Endothelial cell of umbilical vein (primary cell): ENCODE measurements at regions of chr3 and their contacts with region 1.

Region 1: DNA sequence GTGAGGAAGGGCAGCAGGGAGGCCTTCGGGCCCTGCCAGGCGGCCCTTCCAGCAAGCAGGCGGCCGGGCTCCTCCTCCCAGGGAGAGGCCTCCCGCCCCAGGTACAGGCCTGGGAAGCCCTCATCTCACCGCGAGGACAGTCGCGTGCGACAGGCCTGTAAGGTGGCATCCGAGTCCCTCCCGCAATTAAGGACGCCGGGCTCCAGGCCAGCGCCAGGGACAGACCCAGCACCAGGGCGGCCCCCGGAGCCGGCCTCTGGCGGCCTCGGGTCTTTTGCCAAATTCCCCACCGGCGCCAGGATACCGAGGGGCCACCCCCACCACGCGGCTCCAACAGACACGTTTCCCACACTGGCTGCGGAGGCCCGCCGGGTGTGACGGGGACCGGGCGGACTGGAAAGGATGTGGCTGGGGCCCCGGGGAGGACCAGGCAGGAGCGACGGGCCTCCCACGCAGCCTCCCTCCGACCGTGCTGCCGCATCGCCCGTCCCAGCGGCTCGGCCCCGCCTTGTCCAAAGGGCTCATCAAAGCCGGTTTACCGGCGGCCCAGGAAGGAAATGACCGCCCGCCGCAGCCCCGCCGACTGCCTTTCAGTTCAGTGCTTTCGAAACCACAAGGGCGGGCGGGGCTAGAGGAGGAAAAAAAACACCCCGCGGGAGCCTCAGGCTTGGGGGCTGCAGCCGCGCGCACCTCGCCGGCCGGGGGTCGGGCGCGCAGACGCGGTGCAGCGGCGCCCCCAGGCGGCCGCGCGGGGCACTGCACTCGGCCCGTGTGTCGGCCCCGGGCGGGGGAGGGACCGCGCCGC is 11.3 kb downstream of the XXYLT1 start:
- DNase-seq: peak; percentile 96
- H3K4me3 ChIP-seq: peak overlapping the region in 1 of 3 experiments; percentile 70
- H3K27ac ChIP-seq: peak overlapping the region; percentile 98
- H3K4me1 ChIP-seq: peaks cover 55% of the 10 kb centered on the region
- H3K27me3 ChIP-seq: no peaks in the 10 kb centered on the region
- CTCF ChIP-seq: peak; percentile 44 to 88
- POLR2A ChIP-seq: peak; percentile 38

Region 2: DNA sequence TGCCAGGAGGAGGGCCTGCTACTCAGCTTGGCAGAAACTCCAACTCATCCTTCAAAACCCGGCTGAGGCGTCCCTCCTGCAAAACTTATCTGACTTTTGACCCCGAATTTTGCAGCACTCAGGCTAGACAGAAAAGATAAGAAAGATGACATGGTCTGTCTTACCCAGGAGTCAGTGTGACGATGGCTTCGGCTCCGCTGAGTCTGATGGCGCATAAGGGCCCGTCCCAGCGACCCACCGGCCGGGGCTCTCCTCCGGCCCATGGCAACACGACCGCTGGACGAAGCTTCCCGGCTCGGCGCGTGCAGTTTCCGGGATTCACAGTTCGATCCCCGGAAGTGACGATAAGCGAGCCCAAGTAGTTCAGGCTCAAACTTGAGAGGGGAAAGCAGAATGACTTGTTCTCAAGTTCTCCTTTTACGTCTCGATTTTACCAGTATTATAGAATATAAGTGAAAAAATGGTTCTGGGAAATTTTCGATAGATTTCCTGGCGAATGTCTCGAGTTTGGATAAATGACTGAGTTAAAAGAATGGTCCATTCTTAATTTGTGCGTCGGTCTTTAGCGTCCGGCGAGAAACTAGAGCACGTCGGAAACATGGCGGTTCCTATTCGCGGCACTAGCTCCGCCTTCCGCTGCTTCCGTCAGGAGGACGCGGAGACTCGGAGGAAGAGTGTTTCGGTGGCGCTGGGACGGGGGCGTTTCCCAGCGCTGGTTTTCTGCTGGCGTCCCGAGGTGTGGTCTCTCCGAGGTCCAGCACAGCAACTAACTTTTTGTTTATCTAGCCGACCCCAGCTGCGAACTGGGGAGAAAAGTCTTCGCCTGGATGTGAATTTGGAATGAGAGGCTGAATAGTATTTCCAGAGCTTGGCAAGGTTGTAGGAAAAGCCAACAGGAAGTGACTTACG is 587.5 kb before region 1 on chr3 and contains the start of gene LSG1:
- CTCF ChIA-PET with region 1: interaction called, 12 read pairs
- POLR2A ChIA-PET with region 1: no interaction called
- dilution Hi-C with region 1: no loop called
- intact Hi-C with region 1: loop called (anchors 1 kb)
- DNase-seq: peak; percentile 96
- H3K4me3 ChIP-seq: peak within 1 kb of the TSS; percentile 61 to 97 (median 64)
- H3K27ac ChIP-seq: peak within 1 kb of the TSS; percentile 93
- H3K4me1 ChIP-seq: peaks cover 15% of the 10 kb centered on the region
- H3K27me3 ChIP-seq: peaks cover 0 to 2% of the 10 kb centered on the region in 2 experiments
- CTCF ChIP-seq: no peak
- POLR2A ChIP-seq: peak; percentile 80
- total RNA-seq, gene LSG1: 48.3 and 52.7 TPM in 2 replicates

Region 3: GRCh38 chr3:194769020-194769643 is 490.5 kb before region 1 on chr3:
- CTCF ChIA-PET with region 1: no interaction called
- POLR2A ChIA-PET with region 1: no interaction called
- dilution Hi-C with region 1: no loop called
- intact Hi-C with region 1: loop called (anchors 2 kb)
- DNase-seq: peak; percentile 99
- H3K4me3 ChIP-seq: peak overlapping the region in 1 of 3 experiments; percentile 25
- H3K27ac ChIP-seq: no peak overlapping the region
- H3K4me1 ChIP-seq: peaks cover 24% of the 10 kb centered on the region
- H3K27me3 ChIP-seq: no peaks in the 10 kb centered on the region
- CTCF ChIP-seq: no peak
- POLR2A ChIP-seq: peak; percentile 64

Region 4: DNA sequence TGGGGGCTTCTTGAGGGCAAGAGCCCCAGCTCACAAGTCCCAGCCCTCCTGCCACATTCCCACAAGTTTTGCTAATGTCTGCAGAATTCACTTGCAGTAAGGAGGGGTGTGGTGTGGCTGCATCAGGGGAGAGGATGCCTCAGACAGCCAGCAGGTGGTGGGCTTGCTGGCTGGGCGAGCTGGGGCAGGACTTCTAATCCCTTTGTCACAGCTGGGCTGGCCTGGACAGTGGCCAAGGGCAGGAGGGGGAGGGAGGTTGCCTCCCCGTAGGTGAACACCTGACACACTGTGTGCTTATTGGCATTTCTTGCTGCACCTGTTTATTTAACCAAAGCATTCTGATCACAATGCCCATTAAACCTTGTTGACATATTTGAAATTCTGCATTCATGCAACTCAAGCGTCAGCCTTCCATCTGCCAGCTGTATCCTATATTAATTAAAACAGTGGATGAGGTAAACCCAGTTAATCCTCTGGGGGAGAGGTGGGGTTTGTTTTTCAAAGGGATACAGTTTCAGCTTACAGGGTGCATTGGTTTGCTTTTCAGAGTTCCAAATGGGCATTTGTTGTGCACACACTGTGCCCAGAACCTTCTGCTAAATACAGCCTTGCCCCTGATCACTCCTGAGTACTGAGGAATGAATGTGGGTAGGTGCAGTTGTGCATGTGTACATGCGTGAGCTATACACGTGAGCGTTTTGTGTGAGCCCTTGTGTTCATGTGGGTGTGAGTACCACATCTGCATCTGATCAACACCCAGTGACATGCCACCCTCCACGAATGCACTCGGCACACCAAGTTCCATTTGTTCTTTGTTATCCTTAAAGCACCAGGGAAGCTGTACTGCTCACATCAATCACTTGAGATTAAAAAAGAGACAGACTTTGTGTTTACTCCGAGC is 257.5 kb before region 1 on chr3:
- CTCF ChIA-PET with region 1: no interaction called
- POLR2A ChIA-PET with region 1: no interaction called
- dilution Hi-C with region 1: no loop called
- intact Hi-C with region 1: loop called (anchors 1 kb)
- DNase-seq: peak; percentile 80
- H3K4me3 ChIP-seq: no peak overlapping the region
- H3K27ac ChIP-seq: no peak overlapping the region
- H3K4me1 ChIP-seq: peaks cover 5% of the 10 kb centered on the region
- H3K27me3 ChIP-seq: no peaks in the 10 kb centered on the region
- CTCF ChIP-seq: peak; percentile 67 to 83
- POLR2A ChIP-seq: no peak

Region 5: GRCh38 chr3:195117978-195118581 is 141.6 kb before region 1 on chr3:
- CTCF ChIA-PET with region 1: no interaction called
- POLR2A ChIA-PET with region 1: no interaction called
- dilution Hi-C with region 1: no loop called
- intact Hi-C with region 1: loop called (anchors 1 kb)
- DNase-seq: peak; percentile 80
- H3K4me3 ChIP-seq: no peak overlapping the region
- H3K27ac ChIP-seq: peak overlapping the region; percentile 87
- H3K4me1 ChIP-seq: peaks cover 49% of the 10 kb centered on the region
- H3K27me3 ChIP-seq: no peaks in the 10 kb centered on the region
- CTCF ChIP-seq: peak; percentile 51 to 58
- POLR2A ChIP-seq: peak; percentile 65

Region 6: GRCh38 chr3:195182470-195182795 is 77.2 kb before region 1 on chr3:
- CTCF ChIA-PET with region 1: no interaction called
- POLR2A ChIA-PET with region 1: no interaction called
- dilution Hi-C with region 1: no loop called
- intact Hi-C with region 1: loop called (anchors 2 kb)
- DNase-seq: peak; percentile 96
- H3K4me3 ChIP-seq: no peak overlapping the region
- H3K27ac ChIP-seq: peak overlapping the region; percentile 93
- H3K4me1 ChIP-seq: peaks cover 65% of the 10 kb centered on the region
- H3K27me3 ChIP-seq: no peaks in the 10 kb centered on the region
- CTCF ChIP-seq: no peak
- POLR2A ChIP-seq: no peak

Region 7: DNA sequence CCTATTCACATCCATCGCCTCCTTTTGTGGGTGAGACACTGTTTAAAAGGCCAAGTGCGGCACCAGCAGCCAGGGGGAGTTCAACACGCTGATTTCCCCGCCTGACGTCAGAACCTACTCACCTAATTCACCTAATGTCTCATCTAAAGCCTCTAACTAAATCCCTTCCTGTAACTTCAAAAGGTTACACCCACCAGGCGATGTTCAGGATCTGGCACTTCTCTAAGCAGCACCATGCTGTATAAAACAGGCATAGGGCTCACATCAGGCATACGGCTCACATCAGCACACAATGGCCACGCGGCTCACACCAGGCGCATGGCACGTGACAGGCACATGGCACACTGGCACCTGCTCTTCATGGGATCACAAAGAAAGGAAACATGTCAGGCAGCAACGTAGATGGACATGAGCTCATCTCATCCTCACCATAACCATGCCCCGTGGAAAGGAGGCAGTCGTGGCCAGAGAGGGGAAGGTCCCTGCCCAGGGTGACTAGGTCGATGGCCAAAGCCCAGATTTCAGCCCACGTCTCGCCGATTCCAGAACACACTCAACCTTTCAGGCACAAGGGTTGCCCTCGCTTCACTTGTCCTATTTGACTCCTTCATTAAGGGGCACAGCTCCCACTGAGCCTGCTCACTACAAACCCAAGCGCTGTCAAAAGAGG is 10.4 kb before region 1 on chr3:
- CTCF ChIA-PET with region 1: no interaction called
- POLR2A ChIA-PET with region 1: no interaction called
- dilution Hi-C with region 1: no loop called
- intact Hi-C with region 1: no loop called
- DNase-seq: no peak
- H3K4me3 ChIP-seq: no peak overlapping the region
- H3K27ac ChIP-seq: no peak overlapping the region
- H3K4me1 ChIP-seq: no peaks in the 10 kb centered on the region
- H3K27me3 ChIP-seq: no peaks in the 10 kb centered on the region
- CTCF ChIP-seq: no peak
- POLR2A ChIP-seq: no peak

Region 8: DNA sequence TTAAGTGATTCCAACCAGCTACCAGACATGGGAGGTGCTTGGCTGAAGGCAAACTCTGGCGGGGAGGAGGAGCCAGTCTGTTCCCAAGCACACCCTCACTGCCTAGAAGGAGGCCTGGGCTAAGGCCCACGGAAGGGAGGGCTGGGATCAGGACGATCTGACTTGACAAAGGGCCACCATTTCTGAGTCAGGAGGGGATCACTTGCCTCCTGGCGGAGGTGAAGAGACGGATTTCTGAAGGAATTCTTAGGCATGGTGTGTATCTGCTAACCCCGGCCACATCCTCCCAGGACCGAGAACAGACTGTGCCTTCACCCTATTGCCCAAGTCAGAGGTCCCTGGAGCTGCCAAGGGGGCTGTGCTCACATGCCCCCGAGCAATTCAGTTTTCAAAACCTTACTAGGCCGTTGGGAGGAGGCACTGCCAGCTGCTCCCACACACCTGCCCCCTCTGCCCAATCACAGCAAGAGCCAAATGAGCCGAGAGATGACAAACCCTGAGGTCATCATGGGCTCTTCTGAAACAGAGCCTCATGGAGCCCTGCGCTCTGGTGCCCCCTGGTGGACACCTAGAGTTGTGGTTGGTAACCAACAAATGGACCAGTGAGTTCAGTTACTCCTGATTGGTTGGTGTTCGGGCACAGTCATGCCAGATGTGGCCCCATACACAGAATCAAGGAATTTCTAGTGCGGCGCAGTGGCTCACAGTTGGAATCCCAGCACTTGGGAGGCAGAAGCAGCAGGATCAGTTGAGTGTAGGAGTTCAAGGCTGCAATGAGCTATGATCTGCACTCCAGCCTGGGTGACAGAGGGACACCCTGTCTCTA is 655.2 kb after region 1 on chr3:
- CTCF ChIA-PET with region 1: no interaction called
- POLR2A ChIA-PET with region 1: no interaction called
- dilution Hi-C with region 1: no loop called
- intact Hi-C with region 1: no loop called
- DNase-seq: peak; percentile 90
- H3K4me3 ChIP-seq: no peak overlapping the region
- H3K27ac ChIP-seq: no peak overlapping the region
- H3K4me1 ChIP-seq: no peaks in the 10 kb centered on the region
- H3K27me3 ChIP-seq: peaks cover 10% of the 10 kb centered on the region in 2 experiments
- CTCF ChIP-seq: peak; percentile 96 to 97
- POLR2A ChIP-seq: no peak